Gastrocnemius medialis (tissue), 4 donors: ENCODE measurements at regions of chrX and their contacts with region 1.

Region 1: DNA sequence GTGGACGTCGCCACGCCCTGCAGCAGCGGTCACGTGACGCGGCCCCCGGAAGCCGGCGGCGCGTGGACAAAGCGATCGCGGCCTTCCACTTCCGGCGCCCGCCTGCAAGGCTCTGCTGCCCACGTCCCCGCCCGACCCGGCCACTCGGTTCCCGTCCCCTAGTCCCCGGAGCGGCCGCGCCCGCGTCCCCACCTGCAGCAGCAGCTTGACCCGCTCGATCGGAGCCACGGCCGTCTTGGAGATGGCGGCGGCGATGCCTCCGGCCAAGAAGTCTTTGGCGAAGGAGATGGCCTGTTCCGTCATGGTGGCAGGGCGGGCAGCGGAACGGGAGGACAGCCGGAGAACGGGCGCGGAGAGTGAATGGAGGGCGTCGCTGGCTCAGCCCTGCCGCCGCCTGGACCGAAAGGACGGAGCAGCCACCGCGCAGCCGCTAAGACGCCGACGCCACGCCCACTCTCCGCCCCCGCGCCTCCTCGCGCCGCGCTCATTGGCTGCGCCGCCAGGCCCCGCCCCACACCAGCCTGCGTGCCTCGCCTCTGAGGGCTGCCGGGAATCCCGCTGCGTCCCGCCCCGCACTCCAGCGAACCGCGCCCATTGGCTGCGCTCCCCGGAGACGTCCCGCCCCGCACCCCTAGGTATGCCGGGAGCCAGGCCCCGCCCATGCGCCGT is at the start of gene SLC25A6:
- DNase-seq: peak; percentile 98 to 99
- ATAC-seq: peak; percentile 82 to 88
- H3K4me3 ChIP-seq: peak within 1 kb of the TSS; percentile 86 to 100 (median 98)
- H3K27ac ChIP-seq: peak within 1 kb of the TSS; percentile 98 to 100 (median 98)
- H3K4me1 ChIP-seq: peaks cover 38 to 57% of the 10 kb centered on the region in 2 donors
- H3K27me3 ChIP-seq: no peaks in the 10 kb centered on the region
- CTCF ChIP-seq: peak in 3 of 5 experiments; percentile 27 to 48 (median 32)
- POLR2A ChIP-seq: peak; percentile 95 to 98
- total RNA-seq, gene SLC25A6: 60.0 to 69.9 (median 65.1) TPM

Region 2: GRCh38 chrX:386768-387575 is 1004.9 kb before region 1 on chrX and contains the start of gene PPP2R3B:
- in situ Hi-C with region 1: no loop called
- intact Hi-C with region 1: loop called (anchors 5 kb)
- DNase-seq: peak; percentile 99
- ATAC-seq: peak; percentile 98 to 99
- H3K4me3 ChIP-seq: peak within 1 kb of the TSS; percentile 79 to 98 (median 85)
- H3K27ac ChIP-seq: peak within 1 kb of the TSS; percentile 96 to 99 (median 98)
- H3K4me1 ChIP-seq: peaks cover 7% of the 10 kb centered on the region in 2 donors
- H3K27me3 ChIP-seq: no peaks in the 10 kb centered on the region
- CTCF ChIP-seq: peak in 2 of 5 experiments; percentile 32 to 41
- POLR2A ChIP-seq: peak; percentile 46 to 55
- total RNA-seq, gene PPP2R3B: 53.8 to 103 (median 69.4) TPM

Region 3: GRCh38 chrX:989959-990510 is 401.8 kb before region 1 on chrX:
- in situ Hi-C with region 1: no loop called
- intact Hi-C with region 1: loop called (anchors 10 kb)
- DNase-seq: peak in 1 of 2 donors; percentile 81
- ATAC-seq: peak; percentile 74 to 91
- H3K4me3 ChIP-seq: peak overlapping the region in 3 of 4 donors; percentile 30 to 53 (median 35)
- H3K27ac ChIP-seq: peak overlapping the region in 3 of 4 donors; percentile 31 to 72 (median 68)
- H3K4me1 ChIP-seq: no peaks in the 10 kb centered on the region
- H3K27me3 ChIP-seq: no peaks in the 10 kb centered on the region
- CTCF ChIP-seq: no peak
- POLR2A ChIP-seq: no peak

Region 4: DNA sequence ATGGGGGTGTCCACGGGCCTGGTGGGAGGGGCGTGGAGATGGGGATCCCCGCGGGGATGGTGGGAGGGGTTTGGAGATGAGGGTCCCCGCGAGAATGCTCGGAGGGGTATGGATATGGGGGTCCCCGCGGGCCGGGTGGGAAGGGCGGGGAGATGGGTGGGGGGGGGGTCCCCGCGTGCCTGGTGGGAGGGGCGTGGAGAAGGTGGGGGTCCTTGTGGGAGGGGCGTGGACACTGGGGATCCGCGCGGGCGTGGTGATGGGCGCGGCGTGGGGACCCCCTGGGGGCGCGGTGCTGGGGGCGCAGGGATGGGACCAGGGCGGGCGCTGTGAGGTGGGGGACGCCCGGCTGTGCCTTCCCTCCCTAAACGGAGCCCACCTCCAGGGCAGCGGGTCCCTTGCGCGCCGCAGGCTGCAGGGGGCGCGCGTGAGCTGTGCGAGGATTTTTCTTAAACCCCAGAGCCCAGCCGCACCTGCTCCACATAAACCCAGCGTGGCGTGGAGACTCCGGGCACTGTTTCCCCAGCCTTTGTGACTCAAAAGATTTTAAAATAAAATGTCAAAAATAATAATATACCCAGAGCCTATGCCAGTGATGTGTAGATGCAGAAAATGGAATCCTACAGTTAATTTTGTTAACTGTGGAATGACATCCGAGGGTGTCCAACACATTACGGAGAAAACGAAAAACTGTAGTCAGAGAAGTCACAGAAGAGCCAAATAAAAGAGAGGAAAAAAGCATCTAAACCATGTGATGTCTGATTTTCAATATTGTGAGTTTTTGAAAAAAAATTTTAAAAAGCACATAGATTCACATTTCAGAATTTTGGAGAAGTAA is 62.3 kb after region 1 on chrX:
- in situ Hi-C with region 1: loop called in 1 of 4 experiments (anchors 10 kb)
- intact Hi-C with region 1: loop called (anchors 1 kb)
- DNase-seq: peak; percentile 57 to 74
- ATAC-seq: peak; percentile 28 to 51
- H3K4me3 ChIP-seq: peak overlapping the region; percentile 49 to 96 (median 70)
- H3K27ac ChIP-seq: peak overlapping the region; percentile 61 to 98 (median 82)
- H3K4me1 ChIP-seq: peaks cover 10 to 15% of the 10 kb centered on the region in 2 donors
- H3K27me3 ChIP-seq: no peaks in the 10 kb centered on the region
- CTCF ChIP-seq: peak; percentile 89 to 97 (median 91)
- POLR2A ChIP-seq: no peak

Region 5: GRCh38 chrX:1591102-1591900 is 199.5 kb after region 1 on chrX and contains the start of gene AKAP17A:
- in situ Hi-C with region 1: no loop called
- intact Hi-C with region 1: loop called (anchors 1 kb)
- DNase-seq: peak; percentile 91 to 95
- ATAC-seq: peak; percentile 95 to 99
- H3K4me3 ChIP-seq: peak within 1 kb of the TSS; percentile 77 to 99 (median 91)
- H3K27ac ChIP-seq: peak within 1 kb of the TSS; percentile 74 to 88 (median 80)
- H3K4me1 ChIP-seq: peaks cover 6 to 14% of the 10 kb centered on the region in 2 donors
- H3K27me3 ChIP-seq: no peaks in the 10 kb centered on the region
- CTCF ChIP-seq: peak in 1 of 5 experiments; percentile 21
- POLR2A ChIP-seq: peak; percentile 80 to 84
- total RNA-seq, gene AKAP17A: 14.1 to 15.9 (median 14.5) TPM

Region 6: DNA sequence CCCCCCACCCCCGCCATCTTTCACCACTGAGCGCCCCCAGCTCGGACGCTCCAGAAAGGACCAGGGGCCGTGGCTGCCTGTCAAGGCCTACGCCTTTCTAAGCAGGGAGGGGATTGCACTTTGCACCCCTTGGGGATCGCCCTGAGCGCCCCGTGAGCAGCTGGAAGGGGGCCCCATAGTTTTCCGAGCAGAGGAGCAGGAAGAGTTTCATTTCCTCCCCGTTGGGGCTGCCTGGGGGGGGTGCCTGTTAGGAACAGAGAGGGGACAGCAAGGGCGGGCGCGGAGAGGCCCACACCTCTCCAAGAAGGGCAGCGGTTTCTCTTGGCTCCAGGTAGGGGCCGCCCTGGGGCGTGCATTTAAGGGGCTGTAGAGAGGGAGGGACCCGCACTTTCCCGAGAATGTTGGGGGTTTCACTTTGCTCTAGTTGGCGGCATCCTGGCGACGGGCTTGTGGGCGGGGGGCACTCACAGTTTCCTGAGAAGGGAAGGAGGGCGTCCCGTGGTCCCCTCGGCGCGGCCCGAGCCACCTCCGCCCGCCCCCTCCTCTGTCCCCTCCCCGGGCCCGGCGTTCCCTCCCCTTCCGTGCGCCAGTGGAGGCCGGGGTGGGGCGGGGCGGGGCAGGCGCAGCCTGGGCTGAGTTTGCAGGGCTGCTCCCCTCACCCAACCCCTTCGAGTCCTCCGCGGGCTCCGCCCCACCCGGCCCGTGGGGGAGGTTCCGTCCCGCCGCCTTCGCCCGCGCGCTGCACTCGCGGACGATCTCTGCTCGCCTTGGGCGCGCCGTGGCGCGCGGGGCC is 1217.0 kb after region 1 on chrX:
- in situ Hi-C with region 1: no loop called
- intact Hi-C with region 1: loop called (anchors 10 kb)
- DNase-seq: peak; percentile 69 to 78
- ATAC-seq: peak; percentile 85 to 91
- H3K4me3 ChIP-seq: peak overlapping the region; percentile 70 to 97 (median 77)
- H3K27ac ChIP-seq: peak overlapping the region; percentile 74 to 84 (median 80)
- H3K4me1 ChIP-seq: peaks cover 5 to 7% of the 10 kb centered on the region in 2 donors
- H3K27me3 ChIP-seq: no peaks in the 10 kb centered on the region
- CTCF ChIP-seq: no peak
- POLR2A ChIP-seq: peak; percentile 28 to 34

Region 7: GRCh38 chrX:2690856-2691542 is 1299.2 kb after region 1 on chrX and contains the start of gene CD99:
- in situ Hi-C with region 1: no loop called
- intact Hi-C with region 1: loop called (anchors 2 kb)
- DNase-seq: peak; percentile 84 to 85
- ATAC-seq: peak; percentile 77 to 82
- H3K4me3 ChIP-seq: peak within 1 kb of the TSS; percentile 70 to 88 (median 81)
- H3K27ac ChIP-seq: peak within 1 kb of the TSS; percentile 75 to 95 (median 84)
- H3K4me1 ChIP-seq: peaks cover 34 to 35% of the 10 kb centered on the region in 2 donors
- H3K27me3 ChIP-seq: no peaks in the 10 kb centered on the region
- CTCF ChIP-seq: no peak
- POLR2A ChIP-seq: peak; percentile 62 to 77
- total RNA-seq, gene CD99: 110 to 207 (median 133) TPM